Activated CD8-positive, alpha-beta T cell treated with anti-CD3 and anti-CD28 coated beads for 36 hours (primary cell): ENCODE measurements at regions of chr22 and their contacts with region 1.

Region 1: GRCh38 chr22:17638432-17639246 is at the start of gene BCL2L13:
- DNase-seq: peak; percentile 95
- ATAC-seq: peak; percentile 97
- H3K4me3 Mint-ChIP-seq: peak within 1 kb of the TSS; percentile 92
- H3K27ac Mint-ChIP-seq: peak within 1 kb of the TSS; percentile 96
- H3K4me1 Mint-ChIP-seq: peaks cover 22% of the 10 kb centered on the region
- H3K27me3 Mint-ChIP-seq: no peaks in the 10 kb centered on the region
- CTCF ChIP-seq: peak; percentile 29
- total RNA-seq, gene BCL2L13: 36.1 to 38.3 TPM

Region 2: DNA sequence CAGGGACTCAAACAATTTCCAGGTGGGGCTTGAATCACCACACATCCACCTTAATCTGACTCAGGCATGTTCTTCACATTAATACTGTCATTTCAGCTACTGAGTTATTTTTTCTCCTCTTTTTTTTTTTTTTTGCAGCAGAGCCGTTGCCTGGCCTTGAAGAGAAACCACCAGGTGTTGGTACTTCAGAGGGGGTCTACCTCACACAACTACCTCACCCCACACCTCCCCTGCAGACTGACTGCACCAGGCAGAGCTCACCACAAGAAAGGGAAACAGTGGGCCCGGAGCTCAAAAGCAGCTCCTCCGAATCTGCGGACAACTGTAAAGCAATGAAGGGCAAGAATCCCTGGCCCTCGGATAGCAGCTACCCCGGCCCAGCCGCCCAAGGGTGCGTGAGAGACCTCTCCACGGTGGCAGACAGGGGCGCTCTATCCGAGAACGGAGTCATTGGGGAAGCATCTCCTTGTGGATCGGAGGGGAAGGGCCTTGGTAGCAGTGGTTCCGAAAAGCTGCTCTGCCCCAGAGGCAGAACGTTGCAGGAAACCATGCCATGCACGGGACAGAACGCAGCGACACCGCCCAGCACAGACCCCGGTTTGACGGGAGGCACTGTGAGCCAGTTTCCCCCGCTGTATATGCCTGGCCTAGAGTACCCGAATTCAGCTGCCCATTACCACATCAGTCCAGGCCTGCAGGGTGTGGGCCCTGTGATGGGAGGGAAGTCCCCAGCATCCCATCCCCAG is 90.5 kb before region 1 on chr22:
- CTCF ChIA-PET with region 1: no interaction called
- POLR2A ChIA-PET with region 1: no interaction called
- intact Hi-C with region 1: no loop called
- DNase-seq: no peak
- ATAC-seq: no peak
- H3K4me3 Mint-ChIP-seq: no peak overlapping the region
- H3K27ac Mint-ChIP-seq: no peak overlapping the region
- H3K4me1 Mint-ChIP-seq: no peaks in the 10 kb centered on the region
- H3K27me3 Mint-ChIP-seq: no peaks in the 10 kb centered on the region
- CTCF ChIP-seq: no peak

Region 3: DNA sequence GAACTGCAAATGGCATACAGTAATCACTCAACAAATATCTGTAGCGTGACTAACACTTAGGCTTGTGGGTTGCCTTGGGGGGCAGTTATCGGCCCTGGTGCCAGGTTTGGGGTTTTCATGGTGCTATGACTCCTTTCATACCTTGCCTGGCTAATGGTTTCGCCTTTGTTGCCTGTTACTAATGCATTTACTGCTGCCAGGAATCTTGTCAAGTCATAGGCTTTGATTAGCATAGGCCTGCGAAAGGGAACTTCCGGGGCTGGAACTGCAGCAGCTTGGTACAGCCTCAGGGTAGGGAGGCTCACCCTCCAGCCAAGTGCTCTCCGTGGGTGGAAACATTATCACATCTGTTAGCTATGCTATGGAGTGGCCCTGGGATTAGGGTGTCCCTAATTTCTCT is 62.2 kb before region 1 on chr22:
- CTCF ChIA-PET with region 1: no interaction called
- POLR2A ChIA-PET with region 1: no interaction called
- intact Hi-C with region 1: no loop called
- DNase-seq: no peak
- ATAC-seq: no peak
- H3K4me3 Mint-ChIP-seq: no peak overlapping the region
- H3K27ac Mint-ChIP-seq: no peak overlapping the region
- H3K4me1 Mint-ChIP-seq: no peaks in the 10 kb centered on the region
- H3K27me3 Mint-ChIP-seq: no peaks in the 10 kb centered on the region
- CTCF ChIP-seq: no peak

Region 4: DNA sequence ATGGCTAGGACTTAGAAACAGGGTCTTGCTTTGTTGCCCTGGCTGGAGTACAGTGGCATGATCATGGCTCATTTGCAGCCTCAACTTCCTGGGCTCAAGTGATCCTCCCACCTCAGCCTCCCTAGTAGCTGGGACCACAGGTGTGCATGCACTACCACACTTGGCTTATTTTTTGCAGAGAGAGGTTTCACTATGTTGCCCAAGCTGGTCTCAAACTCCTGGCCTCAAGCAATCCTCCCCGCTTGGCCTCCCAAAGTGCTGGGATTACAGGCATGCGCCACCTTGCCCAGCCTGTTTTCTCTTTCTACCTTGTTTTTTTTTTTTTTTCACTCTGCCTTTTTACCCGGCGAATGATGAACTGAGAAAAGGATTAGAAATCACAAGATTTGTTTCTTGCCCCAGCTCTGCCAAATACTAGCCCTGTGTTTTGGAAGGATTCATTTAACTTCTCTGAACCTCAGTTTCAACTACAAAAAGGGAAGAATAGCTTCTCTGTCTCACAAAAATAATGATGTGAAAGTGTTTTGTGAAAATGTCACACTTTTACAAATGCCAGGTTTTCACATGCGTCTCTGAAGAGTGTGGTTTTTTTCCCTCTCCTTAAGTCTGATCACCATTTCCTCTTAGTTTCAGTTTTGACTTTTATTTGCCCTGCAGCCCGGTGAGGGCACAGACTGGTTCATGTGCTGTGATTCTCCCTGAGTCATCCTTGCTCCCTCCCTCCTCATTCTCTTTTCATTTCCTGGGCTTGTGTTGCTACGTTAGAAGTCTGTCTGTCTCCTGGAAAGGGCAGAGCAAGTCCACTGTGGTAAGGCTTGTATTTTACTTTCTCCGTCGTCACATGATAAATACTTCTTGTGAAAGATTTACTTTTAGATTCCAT is 67.6 kb after region 1 on chr22:
- CTCF ChIA-PET with region 1: no interaction called
- POLR2A ChIA-PET with region 1: no interaction called
- intact Hi-C with region 1: loop called (anchors 5 kb)
- DNase-seq: peak; percentile 66
- ATAC-seq: peak; percentile 98
- H3K4me3 Mint-ChIP-seq: peak overlapping the region; percentile 43
- H3K27ac Mint-ChIP-seq: peak overlapping the region; percentile 91
- H3K4me1 Mint-ChIP-seq: peaks cover 19% of the 10 kb centered on the region
- H3K27me3 Mint-ChIP-seq: no peaks in the 10 kb centered on the region
- CTCF ChIP-seq: no peak